ENCODE measurements at regions of chr19 and their contacts with region 1.

Region 1: DNA sequence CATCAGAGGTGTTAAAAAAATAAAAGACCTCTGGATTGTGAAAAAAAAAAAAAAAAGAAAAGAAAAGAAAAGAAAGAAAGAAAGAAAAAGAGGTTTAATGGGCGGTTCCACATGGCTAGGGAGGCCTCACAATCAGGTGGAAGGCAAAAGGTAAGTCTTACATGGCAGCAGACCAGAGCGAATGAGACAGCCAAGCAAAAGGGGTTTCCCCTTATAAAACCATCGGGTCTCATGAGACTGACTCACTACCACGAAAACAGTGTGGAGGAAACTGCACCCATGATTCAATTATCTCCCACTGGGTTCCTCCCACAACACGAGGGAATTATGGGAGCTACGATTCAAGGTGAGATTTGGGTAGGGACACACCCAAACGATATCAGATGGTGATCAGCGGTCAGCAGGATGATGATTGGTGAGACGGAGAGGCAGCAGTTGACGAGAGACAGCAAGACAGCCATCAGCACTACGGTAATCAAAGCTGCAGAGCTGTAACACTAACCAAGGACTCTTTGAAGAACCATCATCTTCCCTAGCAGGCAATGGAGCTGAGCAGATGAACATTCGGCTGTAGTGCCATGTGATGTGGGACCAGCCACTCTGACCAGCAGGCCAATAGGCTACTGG is 3.9 kb upstream of the CD209 start:
- DNase-seq: peak; percentile 67
- ATAC-seq: peak; percentile 98
- H3K4me3 Mint-ChIP-seq: no peak overlapping the region
- H3K27ac Mint-ChIP-seq: no peak overlapping the region
- H3K4me1 Mint-ChIP-seq: peaks cover 31% of the 10 kb centered on the region
- H3K27me3 Mint-ChIP-seq: peaks cover 41% of the 10 kb centered on the region

Region 2: DNA sequence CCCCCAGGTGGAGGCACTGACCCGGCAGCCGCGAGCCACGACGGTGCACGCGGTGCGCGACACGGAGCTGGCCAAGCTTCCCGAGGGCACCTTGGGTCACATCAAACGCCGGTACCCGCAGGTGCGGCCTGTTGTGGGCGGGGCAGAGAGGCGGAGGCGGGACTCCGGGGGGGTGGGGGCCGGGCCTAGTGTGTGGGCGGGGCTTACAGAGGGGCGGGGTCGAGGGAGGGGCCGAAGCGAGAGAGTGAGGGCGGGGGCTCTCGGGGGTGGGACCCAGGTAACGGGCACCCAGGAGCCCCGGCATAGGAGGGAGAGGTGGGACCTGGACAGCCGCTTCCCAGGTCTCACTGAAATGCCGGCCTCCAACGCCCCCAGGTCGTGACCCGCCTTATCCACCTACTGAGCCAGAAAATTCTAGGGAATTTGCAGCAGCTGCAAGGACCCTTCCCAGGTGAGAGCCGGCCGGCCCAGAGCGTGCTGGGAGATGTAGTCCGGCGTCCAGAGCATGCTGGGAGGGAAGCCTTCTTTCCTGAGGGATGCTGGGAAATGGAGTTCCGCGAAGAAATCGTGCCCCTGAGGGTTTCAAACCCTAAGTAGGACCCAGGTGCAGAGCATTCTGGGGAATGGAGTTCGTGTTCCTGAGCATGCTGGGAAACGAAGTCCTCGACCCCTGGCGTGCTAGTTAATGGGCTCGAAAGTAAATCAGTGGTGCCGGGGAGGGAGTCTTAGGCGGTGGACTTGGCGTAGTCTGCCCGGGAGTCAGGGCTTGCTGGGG is 200.1 kb before region 1 on chr19:
- CTCF ChIA-PET with region 1: no interaction called
- POLR2A ChIA-PET with region 1: no interaction called
- intact Hi-C with region 1: no loop called
- DNase-seq: peak; percentile 77
- ATAC-seq: peak; percentile 87
- H3K4me3 Mint-ChIP-seq: no peak overlapping the region
- H3K27ac Mint-ChIP-seq: peak overlapping the region; percentile 58
- H3K4me1 Mint-ChIP-seq: peaks cover 11% of the 10 kb centered on the region
- H3K27me3 Mint-ChIP-seq: no peaks in the 10 kb centered on the region

Region 3: DNA sequence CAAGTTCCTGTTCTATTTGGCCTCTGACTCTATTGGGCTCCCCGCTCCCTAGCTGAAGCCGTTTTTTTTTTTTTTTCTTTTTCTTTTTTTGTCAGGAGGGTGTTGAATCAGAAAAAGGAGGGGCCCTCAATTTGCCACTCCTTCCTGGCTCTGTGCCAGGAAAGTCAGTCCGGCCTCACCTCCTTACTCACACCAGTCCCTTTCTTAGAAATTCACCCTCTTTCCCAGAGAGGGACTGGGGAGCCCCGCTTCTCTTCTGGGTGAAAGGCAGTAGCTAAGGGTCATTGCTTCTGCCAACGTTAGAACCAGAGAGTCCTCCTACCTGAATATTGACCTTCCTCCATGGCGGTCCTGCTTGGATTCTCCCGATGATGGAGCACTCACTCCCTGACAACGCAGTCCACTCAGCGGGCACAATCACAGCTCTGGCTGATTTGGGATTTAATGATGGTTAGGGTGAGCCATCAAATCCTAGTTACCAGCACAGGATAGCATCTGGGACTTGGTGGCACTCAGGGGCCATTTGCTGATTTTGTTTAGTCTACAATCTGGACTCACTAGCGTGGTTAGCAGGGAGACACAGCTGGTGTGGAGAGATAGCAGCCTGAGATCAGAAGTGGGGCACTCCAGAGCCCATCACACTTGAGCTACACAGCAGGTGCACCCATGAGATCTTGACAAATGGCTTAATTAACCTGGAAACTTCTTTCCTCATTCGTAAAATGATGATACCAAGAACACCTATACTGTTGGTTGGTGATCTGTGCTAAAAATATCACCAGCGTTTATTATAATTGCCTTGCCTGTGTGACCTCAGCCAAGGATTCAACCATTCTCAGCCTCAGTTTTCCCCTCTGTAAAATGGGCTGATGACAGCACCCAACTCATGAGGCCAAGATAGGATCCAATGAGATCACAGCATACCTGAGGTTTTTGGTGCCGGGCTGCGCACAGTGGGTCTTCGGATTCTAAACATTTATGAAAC is 51.6 kb before region 1 on chr19:
- CTCF ChIA-PET with region 1: no interaction called
- POLR2A ChIA-PET with region 1: no interaction called
- intact Hi-C with region 1: loop called in 1 of 2 experiments (anchors 2 kb)
- DNase-seq: peak; percentile 80
- ATAC-seq: peak; percentile 78
- H3K4me3 Mint-ChIP-seq: peak overlapping the region; percentile 46
- H3K27ac Mint-ChIP-seq: peak overlapping the region; percentile 39
- H3K4me1 Mint-ChIP-seq: peaks cover 23% of the 10 kb centered on the region
- H3K27me3 Mint-ChIP-seq: peaks cover 13% of the 10 kb centered on the region

Region 4: DNA sequence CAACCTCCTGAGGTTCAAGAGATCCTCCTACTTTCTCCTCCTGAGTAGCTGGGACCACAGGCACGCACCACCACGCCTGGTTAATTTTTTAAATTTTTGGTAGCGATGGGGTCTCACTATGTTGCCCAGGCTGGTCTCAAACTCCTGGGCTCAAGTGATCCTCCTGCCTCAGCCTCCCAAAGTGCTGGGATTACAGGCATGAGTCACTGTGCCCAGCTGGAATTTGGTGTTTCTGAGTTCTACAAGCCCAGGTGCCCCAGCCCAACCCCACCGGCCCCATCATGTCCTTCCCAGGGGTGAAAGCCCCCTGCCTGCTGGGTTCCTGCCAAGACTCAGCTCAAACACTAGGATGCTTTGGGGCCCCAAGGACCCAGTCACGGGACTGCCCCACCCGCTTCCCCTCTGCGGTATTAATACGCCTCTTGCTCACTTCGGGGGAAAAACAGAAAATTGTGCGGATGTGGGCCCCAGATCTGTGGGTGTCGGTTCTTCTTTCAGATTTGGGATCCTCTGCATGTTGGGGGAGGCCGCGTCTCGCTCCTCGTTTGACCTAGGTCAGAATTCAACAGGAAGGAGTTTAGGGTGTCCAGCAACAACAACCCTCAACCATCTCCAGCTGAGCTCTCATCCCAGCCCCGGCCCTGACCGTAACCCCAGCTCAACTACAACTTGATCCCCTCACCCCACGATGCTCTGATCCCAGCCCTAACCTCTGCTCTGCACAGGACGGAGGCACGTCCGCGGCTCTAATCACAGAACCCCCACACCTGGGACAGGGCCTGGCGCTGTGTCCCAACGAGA is 45.7 kb before region 1 on chr19:
- CTCF ChIA-PET with region 1: no interaction called
- POLR2A ChIA-PET with region 1: no interaction called
- intact Hi-C with region 1: loop called in 1 of 2 experiments (anchors 5 kb)
- DNase-seq: peak; percentile 88
- ATAC-seq: peak; percentile 94
- H3K4me3 Mint-ChIP-seq: no peak overlapping the region
- H3K27ac Mint-ChIP-seq: peak overlapping the region; percentile 80
- H3K4me1 Mint-ChIP-seq: peaks cover 40% of the 10 kb centered on the region
- H3K27me3 Mint-ChIP-seq: no peaks in the 10 kb centered on the region

Region 5: GRCh38 chr19:7734220-7735203 is 16.8 kb before region 1 on chr19:
- CTCF ChIA-PET with region 1: interaction called, 6 read pairs
- POLR2A ChIA-PET with region 1: no interaction called
- intact Hi-C with region 1: loop called in 1 of 2 experiments (anchors 1 kb)
- DNase-seq: no peak
- ATAC-seq: no peak
- H3K4me3 Mint-ChIP-seq: no peak overlapping the region
- H3K27ac Mint-ChIP-seq: no peak overlapping the region
- H3K4me1 Mint-ChIP-seq: peaks cover 14% of the 10 kb centered on the region
- H3K27me3 Mint-ChIP-seq: peaks cover 41% of the 10 kb centered on the region

Region 6: DNA sequence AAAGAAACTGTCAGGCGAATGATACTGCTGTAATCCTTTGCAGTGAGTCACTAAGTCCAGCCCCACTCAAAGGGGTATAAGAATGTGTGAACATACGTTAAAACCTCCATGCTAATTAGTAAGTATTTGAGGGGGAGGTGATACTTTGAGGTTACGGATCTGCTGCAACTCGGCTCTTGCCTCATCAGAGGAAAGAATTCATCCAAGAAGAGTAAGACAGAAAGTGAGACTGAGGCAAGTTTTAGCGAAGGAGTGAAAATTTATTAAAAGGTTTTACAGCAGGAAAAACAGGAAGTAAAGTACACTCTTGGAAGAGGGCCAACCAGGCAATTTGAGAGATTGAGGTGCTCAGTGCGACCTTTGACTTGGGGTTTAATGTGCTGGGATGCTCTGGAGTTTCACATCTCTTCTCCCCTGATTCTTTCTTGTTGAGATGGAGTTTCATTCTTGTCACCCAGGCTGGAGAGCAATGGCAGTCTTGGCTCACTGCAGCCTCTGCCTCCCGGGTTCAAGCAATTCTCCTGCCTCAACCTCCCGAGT is 21.6 kb after region 1 on chr19:
- CTCF ChIA-PET with region 1: interaction called, 5 read pairs
- POLR2A ChIA-PET with region 1: no interaction called
- intact Hi-C with region 1: loop called (anchors 1 kb)
- DNase-seq: peak; percentile 64
- ATAC-seq: peak; percentile 97
- H3K4me3 Mint-ChIP-seq: peak overlapping the region; percentile 13
- H3K27ac Mint-ChIP-seq: peak overlapping the region; percentile 85
- H3K4me1 Mint-ChIP-seq: peaks cover 27% of the 10 kb centered on the region
- H3K27me3 Mint-ChIP-seq: peaks cover 31% of the 10 kb centered on the region

Region 7: GRCh38 chr19:7799640-7800355 is 48.5 kb after region 1 on chr19:
- CTCF ChIA-PET with region 1: interaction called, 6 read pairs
- POLR2A ChIA-PET with region 1: interaction called, 5 read pairs
- intact Hi-C with region 1: loop called in 1 of 2 experiments (anchors 2 kb)
- DNase-seq: peak; percentile 73
- ATAC-seq: peak; percentile 63
- H3K4me3 Mint-ChIP-seq: peak overlapping the region; percentile 21
- H3K27ac Mint-ChIP-seq: no peak overlapping the region
- H3K4me1 Mint-ChIP-seq: peaks cover 8% of the 10 kb centered on the region
- H3K27me3 Mint-ChIP-seq: peaks cover 32% of the 10 kb centered on the region

Region 8: GRCh38 chr19:7806876-7807275 is 55.6 kb after region 1 on chr19:
- CTCF ChIA-PET with region 1: interaction called, 5 read pairs
- POLR2A ChIA-PET with region 1: no interaction called
- intact Hi-C with region 1: loop called in 1 of 2 experiments (anchors 1 kb)
- DNase-seq: no peak
- ATAC-seq: no peak
- H3K4me3 Mint-ChIP-seq: no peak overlapping the region
- H3K27ac Mint-ChIP-seq: no peak overlapping the region
- H3K4me1 Mint-ChIP-seq: peaks cover 11% of the 10 kb centered on the region
- H3K27me3 Mint-ChIP-seq: peaks cover 35% of the 10 kb centered on the region

Measured in activated CD4-positive, alpha-beta T cell treated with anti-CD3 and anti-CD28 coated beads for 36 hours (primary cell).